OCI-LY7 (cell line): ENCODE measurements at regions of chr7 and their contacts with region 1.

Region 1: GRCh38 chr7:749140-749551 is 22.1 kb upstream of the PRKAR1B start:
- DNase-seq: no peak
- H3K4me3 ChIP-seq: no peak overlapping the region
- H3K27ac ChIP-seq: no peak overlapping the region
- H3K4me1 ChIP-seq: no peaks in the 10 kb centered on the region
- CTCF ChIP-seq: no peak

Region 2: DNA sequence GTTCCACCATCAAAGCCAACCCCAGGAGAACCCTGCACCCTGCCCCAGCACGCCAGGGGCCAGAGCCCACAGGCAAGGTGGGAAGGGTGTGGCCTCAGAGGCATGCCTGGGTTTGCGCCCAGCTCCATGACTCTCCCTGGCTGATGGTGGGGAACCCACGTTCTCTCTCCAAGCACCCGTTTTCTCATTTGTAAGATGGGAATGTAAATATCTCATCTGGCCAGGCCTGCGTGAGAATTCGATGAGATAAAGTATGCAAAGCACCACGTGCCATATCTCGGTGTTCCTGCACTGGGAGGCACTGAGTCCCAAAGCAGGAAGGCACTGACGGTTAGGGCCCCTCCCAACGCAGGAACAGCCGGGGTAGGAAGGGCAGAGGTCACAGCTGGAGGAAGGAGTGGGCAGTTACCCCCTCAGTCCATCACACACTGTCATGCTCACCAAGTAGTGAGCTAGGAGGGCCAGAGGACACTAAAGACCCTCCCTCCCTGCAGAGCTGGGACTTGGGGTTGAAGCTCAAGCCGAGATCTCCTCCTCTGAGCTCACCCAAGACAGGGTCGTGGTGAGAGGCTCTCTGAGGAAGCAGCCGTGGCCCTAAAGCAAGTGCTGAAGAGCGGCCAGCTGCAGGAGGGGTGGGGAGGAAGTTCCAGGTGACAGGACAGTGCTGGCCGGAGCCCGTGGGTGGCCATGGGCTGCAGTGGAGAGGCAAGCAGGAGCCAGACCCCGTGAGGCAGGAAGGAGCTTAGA is 49.9 kb before region 1 on chr7:
- CTCF ChIA-PET with region 1: no interaction called
- POLR2A ChIA-PET with region 1: no interaction called
- intact Hi-C with region 1: no loop called
- DNase-seq: no peak
- H3K4me3 ChIP-seq: no peak overlapping the region
- H3K27ac ChIP-seq: no peak overlapping the region
- H3K4me1 ChIP-seq: no peaks in the 10 kb centered on the region
- CTCF ChIP-seq: no peak

Region 3: GRCh38 chr7:738755-739454 is 10.2 kb before region 1 on chr7:
- CTCF ChIA-PET with region 1: no interaction called
- POLR2A ChIA-PET with region 1: no interaction called
- intact Hi-C with region 1: no loop called
- DNase-seq: no peak
- H3K4me3 ChIP-seq: no peak overlapping the region
- H3K27ac ChIP-seq: no peak overlapping the region
- H3K4me1 ChIP-seq: no peaks in the 10 kb centered on the region
- CTCF ChIP-seq: no peak

Region 4: DNA sequence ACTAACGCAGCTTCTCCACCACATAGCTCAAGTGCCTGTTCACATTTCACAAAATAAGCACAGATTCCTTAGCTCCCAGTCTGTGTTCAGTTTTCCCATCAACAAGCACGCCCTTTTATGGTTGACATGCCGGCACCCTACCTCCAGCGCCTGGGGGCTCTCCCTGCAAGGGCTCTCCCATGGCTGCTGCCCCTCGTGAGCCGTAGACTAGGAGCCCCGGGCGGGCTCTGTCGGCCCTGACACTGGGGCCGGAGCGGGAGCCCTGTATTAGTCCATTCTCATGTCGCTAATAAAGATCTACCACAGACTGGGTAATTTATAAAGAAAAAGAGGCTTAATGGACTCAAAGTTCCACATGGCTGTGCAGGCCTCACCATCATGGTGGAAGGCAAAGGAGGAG is 12.0 kb after region 1 on chr7:
- CTCF ChIA-PET with region 1: interaction called, 19 read pairs
- POLR2A ChIA-PET with region 1: no interaction called
- intact Hi-C with region 1: no loop called
- DNase-seq: no peak
- H3K4me3 ChIP-seq: no peak overlapping the region
- H3K27ac ChIP-seq: no peak overlapping the region
- H3K4me1 ChIP-seq: no peaks in the 10 kb centered on the region
- CTCF ChIP-seq: no peak